ENCODE measurements at regions of chr4 and their contacts with region 1.

Region 1: DNA sequence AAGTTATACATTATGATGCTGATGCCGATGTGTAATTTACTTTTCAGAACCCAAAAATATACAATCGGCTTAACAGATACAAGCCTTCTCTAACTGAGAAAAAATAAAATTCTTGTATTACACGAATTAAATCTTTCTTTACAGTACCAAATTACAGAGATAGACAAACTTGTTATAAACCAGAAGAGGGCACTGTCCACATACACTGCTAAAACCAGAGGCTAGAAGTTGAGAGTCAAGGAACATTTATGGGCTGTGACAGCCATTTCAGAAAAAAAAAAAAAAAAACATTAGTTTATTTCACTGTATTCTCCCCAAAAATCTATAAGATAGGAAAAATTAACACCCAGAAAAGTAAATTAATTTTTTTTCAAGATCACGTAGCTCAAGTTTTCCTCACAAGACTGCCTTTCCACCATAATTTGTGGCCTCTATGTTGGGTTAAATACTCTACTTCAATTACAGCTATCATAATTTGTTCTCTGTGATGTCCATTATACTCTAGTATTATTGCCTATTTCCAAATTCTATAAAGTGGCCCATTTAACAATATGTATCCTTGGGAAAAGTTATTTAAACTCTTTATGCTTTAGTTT is 12.0 kb downstream of the EREG start:
- DNase-seq: no peak
- ATAC-seq: peak; percentile 54 to 60
- H3K4me3 ChIP-seq: no peak overlapping the region
- H3K27ac ChIP-seq: no peak overlapping the region
- H3K4me1 ChIP-seq: no peaks in the 10 kb centered on the region
- H3K27me3 ChIP-seq: no peaks in the 10 kb centered on the region
- CTCF ChIP-seq: peak; percentile 19 to 56 (median 40)
- POLR2A ChIP-seq: no peak

Region 2: DNA sequence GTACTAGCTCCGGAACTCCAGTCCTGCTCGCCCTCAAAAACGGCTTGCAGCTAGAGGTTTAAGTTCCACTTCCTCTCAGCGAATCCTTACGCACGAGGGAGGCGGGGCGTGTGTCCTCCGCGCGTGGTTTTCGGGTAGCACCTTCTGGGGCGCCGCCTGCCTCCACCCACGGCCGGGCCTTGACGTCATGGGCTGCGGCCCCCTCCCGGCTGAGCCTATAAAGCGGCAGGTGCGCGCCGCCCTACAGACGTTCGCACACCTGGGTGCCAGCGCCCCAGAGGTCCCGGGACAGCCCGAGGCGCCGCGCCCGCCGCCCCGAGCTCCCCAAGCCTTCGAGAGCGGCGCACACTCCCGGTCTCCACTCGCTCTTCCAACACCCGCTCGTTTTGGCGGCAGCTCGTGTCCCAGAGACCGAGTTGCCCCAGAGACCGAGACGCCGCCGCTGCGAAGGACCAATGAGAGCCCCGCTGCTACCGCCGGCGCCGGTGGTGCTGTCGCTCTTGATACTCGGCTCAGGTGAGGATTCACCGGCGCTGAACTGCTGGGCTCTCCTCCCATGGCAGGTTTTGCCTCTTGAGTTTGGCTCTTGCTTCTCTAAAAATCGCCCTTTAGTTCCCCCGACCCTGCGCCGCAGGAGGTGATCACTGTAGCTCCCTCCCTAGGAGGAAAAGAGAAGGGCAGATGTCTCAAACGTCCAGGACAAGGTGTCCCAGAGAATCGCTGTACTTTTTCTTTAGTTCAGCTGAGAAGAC is 68.1 kb after region 1 on chr4 and contains the start of gene AREG:
- in situ Hi-C with region 1: no loop called
- intact Hi-C with region 1: loop called (anchors 5 kb)
- DNase-seq: peak; percentile 41 to 52
- ATAC-seq: peak; percentile 88 to 90
- H3K4me3 ChIP-seq: peak within 1 kb of the TSS; percentile 61 to 69 (median 64)
- H3K27ac ChIP-seq: peak within 1 kb of the TSS; percentile 32 to 70 (median 56)
- H3K4me1 ChIP-seq: peaks cover 0 to 3% of the 10 kb centered on the region in 2 donors
- H3K27me3 ChIP-seq: peaks cover 0 to 5% (median 0%) of the 10 kb centered on the region in 3 donors
- CTCF ChIP-seq: peak in 4 of 5 experiments; percentile 17 to 50 (median 35)
- POLR2A ChIP-seq: peak; percentile 51 to 67
- total RNA-seq, gene AREG: 4.0 to 56.1 (median 22.5) TPM

Region 3: DNA sequence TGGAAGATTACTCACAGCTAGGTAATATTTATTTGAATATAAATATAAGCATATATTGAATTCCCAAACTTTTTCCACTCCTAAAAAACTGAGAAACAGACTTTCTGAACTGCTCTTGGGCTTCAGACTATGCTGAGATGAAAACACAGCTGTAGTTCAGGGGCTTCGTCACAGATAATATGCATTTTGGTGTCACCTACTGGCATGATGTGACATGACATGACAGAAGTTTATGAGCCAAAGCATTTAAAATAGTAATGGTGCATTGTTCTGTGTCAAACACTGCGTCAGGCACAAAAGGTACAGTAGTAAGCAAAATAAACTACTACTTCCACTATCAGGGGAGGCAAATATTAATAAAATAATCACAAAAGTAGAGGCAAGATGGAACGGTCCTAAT is 246.1 kb after region 1 on chr4:
- in situ Hi-C with region 1: no loop called
- intact Hi-C with region 1: loop called (anchors 5 kb)
- DNase-seq: no peak
- ATAC-seq: no peak
- H3K4me3 ChIP-seq: no peak overlapping the region
- H3K27ac ChIP-seq: no peak overlapping the region
- H3K4me1 ChIP-seq: no peaks in the 10 kb centered on the region
- H3K27me3 ChIP-seq: no peaks in the 10 kb centered on the region
- CTCF ChIP-seq: peak in 3 of 5 experiments; percentile 10 to 24 (median 15)
- POLR2A ChIP-seq: no peak

Measured in gastrocnemius medialis (tissue), 4 donors.